H1 (cell line): ENCODE measurements at regions of chr16 and their contacts with region 1.

Region 1: DNA sequence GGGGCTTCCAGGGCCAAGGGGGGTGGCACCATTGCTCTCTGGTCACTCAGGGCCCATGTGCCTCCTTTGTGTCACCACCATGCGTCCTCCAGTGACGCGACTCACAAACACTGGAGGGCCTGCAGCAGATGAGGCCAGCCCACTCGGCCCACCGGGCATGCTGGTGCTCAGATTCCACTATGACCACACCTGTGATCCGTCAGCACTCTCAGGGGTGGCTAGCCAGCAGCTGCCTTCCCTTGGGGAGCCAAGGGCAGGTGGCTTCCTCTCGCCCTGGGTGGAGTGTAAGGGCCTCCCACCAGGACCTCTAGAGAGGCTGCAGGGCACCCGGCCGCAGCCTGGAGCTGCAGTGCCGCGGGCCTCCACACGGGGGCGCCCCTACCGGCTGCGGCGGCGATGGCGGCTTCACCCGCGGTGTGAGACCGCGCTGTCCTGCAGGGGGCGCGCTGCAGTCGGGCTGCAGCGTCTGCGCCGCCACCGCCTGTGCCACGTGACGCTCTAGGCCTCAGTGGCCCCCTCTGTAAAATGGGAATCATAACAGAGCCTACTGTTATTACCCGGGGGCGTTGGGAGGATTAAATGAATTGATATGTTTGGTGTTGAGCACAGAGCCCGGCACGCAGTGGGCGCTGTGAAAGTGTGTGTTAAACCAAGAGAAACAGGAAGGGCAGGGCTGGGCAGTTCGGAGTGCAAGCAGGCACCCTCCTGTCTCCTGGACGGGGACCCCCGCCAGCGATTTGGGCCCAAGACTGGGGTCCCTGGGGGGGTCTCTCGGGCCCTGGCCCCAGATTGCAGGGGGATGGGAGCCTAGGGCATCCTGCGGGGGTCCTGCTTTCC is 192.4 kb upstream of the GSE1 start:
- DNase-seq: peak in 1 of 2 experiments; percentile 96
- H3K4me3 ChIP-seq: no peak overlapping the region
- H3K27ac ChIP-seq: no peak overlapping the region
- H3K4me1 ChIP-seq: peaks cover 0 to 21% (median 5%) of the 10 kb centered on the region in 4 experiments; a peak in 5 of 7 replicates
- H3K27me3 ChIP-seq: no peaks in the 10 kb centered on the region
- CTCF ChIP-seq: peak; percentile 98 to 99 (median 99)
- EP300 ChIP-seq: no peak
- POLR2A ChIP-seq: no peak
- RAD21 ChIP-seq: peak; percentile 77 to 81

Region 2: DNA sequence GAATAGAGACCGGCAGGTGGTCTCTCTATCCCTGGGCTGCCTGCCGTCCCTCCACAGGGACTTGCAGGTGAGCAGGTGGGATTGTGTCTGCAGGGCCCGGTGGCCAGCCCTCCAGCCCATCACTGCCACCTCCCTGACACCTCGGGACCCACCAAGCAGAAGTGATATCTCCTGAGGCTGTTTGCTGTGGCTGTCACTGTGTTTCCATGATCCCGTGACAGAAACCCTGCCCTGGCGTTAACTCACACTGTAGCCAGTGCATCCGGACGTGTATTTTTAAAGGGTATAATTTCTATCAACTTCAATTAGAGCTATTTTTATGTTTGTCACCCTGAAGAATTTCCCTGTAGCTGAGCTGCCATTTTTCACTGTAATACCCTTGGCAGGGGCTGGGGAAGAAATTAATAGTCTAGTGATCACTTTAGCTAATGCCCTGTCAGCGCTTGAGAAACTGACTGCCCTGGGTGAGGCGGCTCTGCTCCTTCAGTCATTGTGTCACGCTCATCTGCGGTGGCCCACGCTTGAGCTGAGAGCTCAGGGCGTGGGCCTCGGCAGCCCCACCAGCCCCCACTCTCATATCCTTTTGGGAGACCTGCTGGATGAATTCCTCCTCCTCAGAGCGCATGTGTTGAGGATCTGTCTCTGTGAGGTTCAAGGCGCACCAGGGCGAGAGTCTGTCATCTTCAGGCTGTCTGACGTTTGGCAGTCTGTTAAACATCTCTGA is 78.6 kb before region 1 on chr16:
- CTCF ChIA-PET with region 1: interaction called, 38 read pairs
- POLR2A ChIA-PET with region 1: no interaction called
- DNase-seq: no peak
- H3K4me3 ChIP-seq: no peak overlapping the region
- H3K27ac ChIP-seq: no peak overlapping the region
- H3K4me1 ChIP-seq: peaks cover 0 to 5% (median 0%) of the 10 kb centered on the region in 4 experiments; a peak in 1 of 7 replicates
- H3K27me3 ChIP-seq: peaks cover 0 to 3% (median under 1%) of the 10 kb centered on the region in 4 experiments; a peak in 2 of 7 replicates
- CTCF ChIP-seq: no peak
- EP300 ChIP-seq: no peak
- POLR2A ChIP-seq: no peak
- RAD21 ChIP-seq: no peak

Region 3: GRCh38 chr16:85393674-85394483 is 26.8 kb before region 1 on chr16:
- CTCF ChIA-PET with region 1: interaction called, 182 read pairs
- POLR2A ChIA-PET with region 1: interaction called, 4 read pairs
- DNase-seq: peak in 1 of 2 experiments; percentile 97
- H3K4me3 ChIP-seq: peak overlapping the region in 1 of 4 experiments; percentile 43; a peak in 1 of 8 replicates
- H3K27ac ChIP-seq: no peak overlapping the region
- H3K4me1 ChIP-seq: peaks cover 0 to 31% (median 25%) of the 10 kb centered on the region in 4 experiments; a peak in 6 of 7 replicates
- H3K27me3 ChIP-seq: no peaks in the 10 kb centered on the region
- CTCF ChIP-seq: peak; percentile 85 to 98 (median 94)
- EP300 ChIP-seq: no peak
- POLR2A ChIP-seq: no peak
- RAD21 ChIP-seq: peak; percentile 72 to 81

Region 4: DNA sequence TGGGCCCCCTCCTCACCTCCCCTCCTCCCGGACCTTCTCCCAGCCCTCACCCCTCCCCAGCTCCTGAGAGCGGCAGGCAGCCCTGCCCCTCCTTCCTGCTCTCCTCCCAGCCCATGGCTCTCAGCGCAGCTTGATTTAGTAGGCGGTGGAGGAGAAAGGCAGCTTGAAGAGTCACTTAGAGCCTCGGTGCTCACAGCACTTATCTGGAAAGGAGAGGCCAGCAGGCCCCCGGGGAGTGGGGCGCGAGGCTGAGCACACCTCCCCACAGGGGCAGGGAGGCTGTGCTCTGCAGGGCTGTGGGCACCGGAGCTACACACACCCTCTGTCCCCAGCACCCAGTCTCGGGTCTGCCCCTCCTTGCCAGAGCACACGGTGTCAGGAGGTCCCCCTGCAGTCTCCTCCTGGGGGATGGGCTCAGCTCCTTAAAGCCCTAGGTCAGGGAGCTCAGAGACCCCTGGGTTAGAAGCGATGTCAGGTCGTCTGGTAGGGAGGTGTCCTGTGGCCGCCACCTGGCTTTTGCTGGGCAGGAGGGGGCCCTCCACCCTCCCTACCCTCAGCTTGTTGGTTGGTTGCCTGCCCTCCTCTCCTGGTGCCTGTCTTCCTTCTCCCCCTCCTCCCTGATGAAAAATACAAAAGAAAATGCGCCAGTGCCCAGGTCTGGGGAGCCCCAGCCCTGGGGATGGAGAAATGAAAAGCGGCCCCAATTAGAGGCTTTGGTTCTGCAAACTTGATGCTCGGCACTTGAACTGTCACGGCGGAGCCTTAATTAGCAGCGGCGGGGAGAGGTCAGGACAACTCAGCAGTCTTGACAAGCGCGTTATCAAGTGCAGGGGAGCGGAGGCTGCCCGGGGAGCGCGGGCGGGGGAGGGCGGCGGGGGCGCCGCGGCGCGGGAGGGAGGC is 41.3 kb after region 1 on chr16:
- CTCF ChIA-PET with region 1: interaction called, 130 read pairs
- POLR2A ChIA-PET with region 1: no interaction called
- DNase-seq: peak in 1 of 2 experiments; percentile 76
- H3K4me3 ChIP-seq: peak overlapping the region; percentile 4 to 57 (median 46)
- H3K27ac ChIP-seq: no peak overlapping the region
- H3K4me1 ChIP-seq: peaks cover 7 to 33% (median 25%) of the 10 kb centered on the region in 4 experiments
- H3K27me3 ChIP-seq: peaks cover 5 to 49% (median 36%) of the 10 kb centered on the region in 4 experiments; a peak in 6 of 7 replicates
- CTCF ChIP-seq: no peak
- EP300 ChIP-seq: no peak
- POLR2A ChIP-seq: no peak
- RAD21 ChIP-seq: no peak

Region 5: DNA sequence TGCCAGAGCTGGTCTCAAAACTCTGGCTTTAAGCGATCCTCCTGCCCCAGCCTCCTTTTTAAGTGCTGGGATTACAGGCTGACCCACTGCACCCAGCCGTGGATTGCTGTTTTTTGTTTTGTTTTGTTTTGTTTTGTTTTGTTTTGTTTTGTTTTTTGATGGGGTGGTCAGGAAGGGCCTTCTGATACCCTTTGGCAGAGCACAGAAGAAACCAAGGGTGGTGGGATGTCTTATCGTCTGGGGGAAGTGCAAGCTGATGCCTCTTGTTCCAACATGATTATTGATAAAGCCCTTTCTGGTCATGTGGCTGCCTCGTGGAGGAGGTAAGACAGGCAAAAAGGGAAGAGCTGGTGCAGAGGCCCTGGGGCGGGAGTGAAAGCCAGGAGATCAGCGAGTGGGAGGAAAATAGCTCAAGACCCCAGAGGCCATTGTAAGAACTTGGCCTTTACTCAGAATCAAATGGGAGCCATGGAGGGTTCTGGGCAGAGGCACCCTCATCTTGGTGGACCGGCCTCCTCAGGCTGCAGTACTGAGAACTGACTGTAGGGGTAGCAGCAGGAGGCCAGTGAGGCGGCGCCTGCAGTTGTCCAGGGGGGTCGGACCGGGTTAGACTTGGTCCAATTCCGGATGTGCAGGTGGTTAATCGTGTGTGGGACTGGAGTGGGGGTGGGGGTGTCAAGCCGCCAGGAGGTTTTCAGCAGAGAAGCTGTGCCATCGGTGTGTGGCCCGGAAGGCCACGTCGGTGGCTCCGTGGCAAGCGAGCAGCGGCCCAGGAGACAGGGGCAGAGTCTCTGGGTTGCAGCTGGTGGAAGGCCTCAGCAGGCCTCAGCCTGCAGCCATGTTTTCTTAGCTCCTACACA is 108.0 kb after region 1 on chr16:
- CTCF ChIA-PET with region 1: interaction called, 10 read pairs
- POLR2A ChIA-PET with region 1: no interaction called
- DNase-seq: no peak
- H3K4me3 ChIP-seq: no peak overlapping the region
- H3K27ac ChIP-seq: no peak overlapping the region
- H3K4me1 ChIP-seq: peaks cover 3 to 24% (median 13%) of the 10 kb centered on the region in 4 experiments
- H3K27me3 ChIP-seq: no peaks in the 10 kb centered on the region
- CTCF ChIP-seq: peak; percentile 37 to 57 (median 47)
- EP300 ChIP-seq: no peak
- POLR2A ChIP-seq: no peak
- RAD21 ChIP-seq: no peak; a peak in 1 of 4 replicates

Region 6: GRCh38 chr16:85574672-85575475 is 154.2 kb after region 1 on chr16:
- CTCF ChIA-PET with region 1: interaction called, 18 read pairs
- POLR2A ChIA-PET with region 1: no interaction called
- DNase-seq: no peak
- H3K4me3 ChIP-seq: no peak overlapping the region
- H3K27ac ChIP-seq: no peak overlapping the region
- H3K4me1 ChIP-seq: peaks cover 12 to 69% (median 46%) of the 10 kb centered on the region in 4 experiments
- H3K27me3 ChIP-seq: peaks cover 0 to 7% (median 2%) of the 10 kb centered on the region in 4 experiments; a peak in 2 of 7 replicates
- CTCF ChIP-seq: no peak
- EP300 ChIP-seq: no peak
- POLR2A ChIP-seq: no peak
- RAD21 ChIP-seq: no peak

Region 7: DNA sequence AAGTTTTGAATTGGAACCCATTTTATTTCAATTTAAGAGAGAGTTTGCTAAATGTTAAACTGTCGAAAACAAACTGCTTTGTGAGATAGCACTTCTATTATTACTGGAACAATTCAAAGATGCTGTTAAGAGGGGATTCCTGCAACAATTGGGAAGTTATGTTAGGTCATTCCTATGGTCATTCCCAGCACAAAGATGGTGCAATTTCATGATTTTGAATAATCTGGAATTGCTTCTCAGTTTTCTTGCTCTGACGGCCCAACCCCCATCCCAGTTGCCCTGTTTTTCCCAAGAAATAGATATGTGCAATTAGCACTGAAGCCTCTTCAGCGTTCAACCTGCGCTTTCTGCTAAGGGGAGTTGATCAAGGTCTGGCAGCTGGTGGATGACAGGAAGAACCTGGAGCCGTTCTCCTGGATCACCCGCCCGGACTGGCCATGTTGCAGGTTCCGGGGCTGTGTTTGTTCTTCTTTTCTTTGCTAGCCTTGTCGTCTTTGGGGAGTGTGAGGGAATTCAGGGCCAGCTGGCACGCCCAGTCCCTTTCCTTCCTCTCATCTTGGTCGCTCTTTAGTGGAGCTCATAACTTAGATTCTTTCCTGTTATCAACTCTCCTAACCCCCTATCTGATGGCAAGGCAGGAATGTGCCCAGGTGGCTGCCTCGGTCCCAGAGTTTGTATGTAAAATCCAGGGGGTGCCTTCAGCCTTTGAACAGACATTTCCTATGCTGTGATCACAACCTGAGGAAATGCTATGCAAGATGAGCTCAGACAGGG is 449.3 kb after region 1 on chr16:
- CTCF ChIA-PET with region 1: no interaction called
- POLR2A ChIA-PET with region 1: no interaction called
- DNase-seq: no peak
- H3K4me3 ChIP-seq: peak overlapping the region in 1 of 4 experiments; percentile 5; a peak in 1 of 8 replicates
- H3K27ac ChIP-seq: no peak overlapping the region
- H3K4me1 ChIP-seq: peaks cover 0 to 5% (median 2%) of the 10 kb centered on the region in 4 experiments; a peak in 4 of 7 replicates
- H3K27me3 ChIP-seq: no peaks in the 10 kb centered on the region; a peak in 1 of 7 replicates
- CTCF ChIP-seq: no peak
- EP300 ChIP-seq: no peak
- POLR2A ChIP-seq: no peak
- RAD21 ChIP-seq: no peak